Dendritic cell treated with granulocyte-macrophage colony-stimulating factor and Interleukin-4, amounts not matched to agents 40 ng/mL and 50 ng/mL, for 4 days (primary cell): ENCODE measurements at regions of chr15 and their contacts with region 1.

Region 1: GRCh38 chr15:52179278-52180195 is 11.7 kb downstream of the GNB5 start:
- H3K4me3 Mint-ChIP-seq: peak overlapping the region; percentile 92
- H3K27ac Mint-ChIP-seq: peak overlapping the region; percentile 82
- H3K4me1 Mint-ChIP-seq: peaks cover 17% of the 10 kb centered on the region
- H3K27me3 Mint-ChIP-seq: peaks cover 37% of the 10 kb centered on the region

Region 2: DNA sequence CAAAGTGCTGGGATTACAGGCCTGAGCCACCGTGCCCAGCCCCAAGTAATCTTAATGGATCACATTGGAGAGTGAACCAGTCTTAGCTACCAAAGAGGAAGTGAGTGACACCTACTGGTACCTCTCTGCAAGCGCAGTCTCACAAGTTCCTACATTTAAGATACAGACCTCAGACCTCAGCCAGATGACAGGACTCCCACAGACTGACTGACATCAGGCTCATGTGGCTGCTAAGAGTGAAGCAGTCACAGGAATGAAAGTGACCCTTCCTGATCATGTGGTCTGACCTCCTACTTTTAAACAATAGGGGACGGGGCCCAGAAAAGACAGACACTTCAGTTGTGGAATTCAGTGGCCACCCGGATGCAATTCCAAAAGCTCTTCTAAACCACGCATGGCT is 47.9 kb after region 1 on chr15:
- intact Hi-C with region 1: loop called (anchors 5 kb)
- H3K4me3 Mint-ChIP-seq: no peak overlapping the region
- H3K27ac Mint-ChIP-seq: no peak overlapping the region
- H3K4me1 Mint-ChIP-seq: peaks cover 12% of the 10 kb centered on the region
- H3K27me3 Mint-ChIP-seq: no peaks in the 10 kb centered on the region